ENCODE measurements at regions of chr10 and their contacts with region 1.

Region 1: GRCh38 chr10:77391605-77392235 is 245.9 kb downstream of the KCNMA1 start:
- DNase-seq: peak; percentile 78
- H3K4me3 ChIP-seq: no peak overlapping the region
- H3K27ac ChIP-seq: peak overlapping the region; percentile 64
- H3K4me1 ChIP-seq: peaks cover 66% of the 10 kb centered on the region
- H3K27me3 ChIP-seq: no peaks in the 10 kb centered on the region
- CTCF ChIP-seq: peak; percentile 59 to 75

Region 2: DNA sequence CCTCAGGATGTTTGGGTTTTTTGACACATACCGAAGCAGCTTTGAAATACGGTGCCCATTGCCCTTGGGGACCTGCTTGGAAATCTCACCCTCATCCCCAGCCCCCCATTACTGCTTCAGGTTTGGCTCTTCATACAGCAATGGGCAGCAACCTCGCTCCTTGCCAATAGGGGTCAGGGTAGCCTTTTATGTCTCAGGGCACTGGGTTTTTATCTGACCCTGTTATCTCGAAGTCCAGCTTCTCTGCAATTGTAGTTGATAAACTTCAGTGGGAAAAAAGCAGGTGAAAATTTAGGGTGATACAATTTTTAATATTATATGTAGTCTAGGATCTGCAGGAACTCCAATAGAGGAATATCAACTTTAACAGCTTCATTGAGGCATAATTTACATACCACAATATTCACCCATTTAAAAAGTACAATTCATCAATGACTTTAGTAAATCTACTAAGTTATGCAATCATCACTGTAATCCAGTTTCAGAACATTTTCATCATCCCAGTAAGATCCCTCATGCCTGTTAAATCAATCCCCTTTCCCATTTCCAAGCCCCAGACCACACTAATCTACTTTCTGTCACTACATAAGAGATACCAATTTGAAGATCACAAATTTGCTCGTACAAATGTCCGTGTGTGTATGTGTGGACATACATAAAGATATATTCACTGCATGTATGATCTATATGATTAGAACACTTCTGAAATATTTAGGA is 140.3 kb before region 1 on chr10:
- CTCF ChIA-PET with region 1: no interaction called
- dilution Hi-C with region 1: no loop called
- in situ Hi-C with region 1: no loop called
- intact Hi-C with region 1: loop called (anchors 2 kb)
- DNase-seq: peak; percentile 29
- H3K4me3 ChIP-seq: no peak overlapping the region
- H3K27ac ChIP-seq: no peak overlapping the region
- H3K4me1 ChIP-seq: peaks cover 10% of the 10 kb centered on the region
- H3K27me3 ChIP-seq: no peaks in the 10 kb centered on the region
- CTCF ChIP-seq: peak; percentile 67 to 77

Region 3: DNA sequence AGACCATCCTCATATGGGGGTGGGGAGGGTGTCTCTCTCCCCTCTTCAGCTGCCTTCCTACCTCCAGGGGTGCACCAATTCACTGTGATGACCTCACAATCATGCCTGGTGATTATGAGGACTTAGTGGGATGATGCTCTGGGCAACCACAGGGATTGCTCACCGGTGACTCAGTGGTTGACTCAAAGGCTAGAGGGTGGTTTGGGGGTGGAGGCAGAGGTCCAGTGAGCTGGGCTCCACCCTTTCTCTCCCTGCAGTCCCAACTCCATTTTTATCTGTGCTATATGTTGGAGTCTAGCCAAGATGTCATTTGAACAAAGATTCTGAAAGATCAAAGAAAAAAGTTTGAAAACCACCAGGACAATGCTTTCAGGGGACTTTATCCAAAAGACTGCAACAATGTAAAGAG is 41.0 kb before region 1 on chr10:
- CTCF ChIA-PET with region 1: no interaction called
- dilution Hi-C with region 1: no loop called
- in situ Hi-C with region 1: no loop called
- intact Hi-C with region 1: loop called (anchors 2 kb)
- DNase-seq: peak; percentile 98
- H3K4me3 ChIP-seq: no peak overlapping the region
- H3K27ac ChIP-seq: peak overlapping the region; percentile 69
- H3K4me1 ChIP-seq: peaks cover 40% of the 10 kb centered on the region
- H3K27me3 ChIP-seq: no peaks in the 10 kb centered on the region
- CTCF ChIP-seq: peak in 1 of 2 donors; percentile 27

Region 4: DNA sequence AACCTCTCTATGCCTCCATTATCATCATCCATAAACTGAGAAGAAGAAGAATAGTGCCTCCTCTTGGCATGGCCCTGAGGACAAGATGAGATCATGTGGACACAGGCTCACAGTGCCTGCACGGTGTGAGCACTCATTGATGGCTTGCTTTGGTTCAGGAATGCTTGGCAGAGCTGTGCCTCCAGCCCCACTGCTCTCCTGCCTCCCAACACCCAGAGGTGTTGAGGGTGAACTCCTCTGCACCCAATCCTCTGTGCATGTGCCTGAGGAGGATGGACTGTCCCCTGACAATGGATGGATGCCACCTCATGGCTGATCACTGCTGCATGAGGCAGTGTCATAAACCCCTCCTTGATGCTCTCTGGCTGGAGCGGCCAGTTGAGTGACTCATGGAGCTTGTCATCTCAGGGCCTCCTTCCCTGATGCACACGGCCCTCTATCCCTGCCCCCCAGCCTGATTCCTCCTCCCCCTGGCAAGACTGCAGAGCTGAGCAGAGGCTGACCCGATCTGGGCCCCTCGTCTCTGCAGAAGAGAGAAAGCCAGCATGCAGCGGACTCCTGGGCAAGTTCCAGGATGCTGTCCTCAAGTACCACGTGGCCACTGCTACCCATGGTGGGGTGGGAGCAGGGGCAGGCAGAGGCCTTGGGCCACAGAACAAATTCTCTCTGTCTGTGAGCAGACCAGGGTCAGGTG is 109.6 kb after region 1 on chr10:
- CTCF ChIA-PET with region 1: interaction called, 5 read pairs
- dilution Hi-C with region 1: no loop called
- in situ Hi-C with region 1: no loop called
- intact Hi-C with region 1: loop called (anchors 2 kb)
- DNase-seq: peak; percentile 78
- H3K4me3 ChIP-seq: no peak overlapping the region
- H3K27ac ChIP-seq: peak overlapping the region; percentile 45
- H3K4me1 ChIP-seq: peaks cover 69% of the 10 kb centered on the region
- H3K27me3 ChIP-seq: no peaks in the 10 kb centered on the region
- CTCF ChIP-seq: no peak

Region 5: GRCh38 chr10:77592946-77593636 is 201.4 kb after region 1 on chr10:
- CTCF ChIA-PET with region 1: no interaction called
- dilution Hi-C with region 1: no loop called
- in situ Hi-C with region 1: no loop called
- intact Hi-C with region 1: no loop called
- DNase-seq: peak; percentile 96
- H3K4me3 ChIP-seq: no peak overlapping the region
- H3K27ac ChIP-seq: peak overlapping the region; percentile 74
- H3K4me1 ChIP-seq: peaks cover 24% of the 10 kb centered on the region
- H3K27me3 ChIP-seq: no peaks in the 10 kb centered on the region
- CTCF ChIP-seq: no peak

Region 6: DNA sequence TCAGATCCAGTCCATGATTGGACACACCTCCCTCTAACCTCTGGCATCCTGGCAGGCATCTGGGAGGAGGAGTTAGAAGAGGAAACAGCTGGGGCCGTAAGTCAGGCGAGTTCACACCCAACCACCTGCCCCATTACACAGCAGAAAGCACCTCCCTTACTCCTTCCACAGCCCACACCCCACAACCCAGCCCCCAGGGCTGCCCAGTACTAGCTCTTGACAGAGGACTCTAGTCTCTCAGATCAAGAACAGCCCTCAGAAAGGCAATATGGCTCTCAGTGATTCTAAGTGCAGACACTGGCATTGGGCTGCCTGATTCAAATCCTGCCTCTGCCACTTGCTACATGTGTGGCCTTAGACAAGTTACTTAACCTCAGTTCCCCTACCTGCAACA is 211.8 kb after region 1 on chr10:
- CTCF ChIA-PET with region 1: interaction called, 3 read pairs
- dilution Hi-C with region 1: no loop called
- in situ Hi-C with region 1: no loop called
- intact Hi-C with region 1: loop called (anchors 1 kb)
- DNase-seq: no peak
- H3K4me3 ChIP-seq: no peak overlapping the region
- H3K27ac ChIP-seq: no peak overlapping the region
- H3K4me1 ChIP-seq: peaks cover 44% of the 10 kb centered on the region
- H3K27me3 ChIP-seq: no peaks in the 10 kb centered on the region
- CTCF ChIP-seq: no peak

Region 7: DNA sequence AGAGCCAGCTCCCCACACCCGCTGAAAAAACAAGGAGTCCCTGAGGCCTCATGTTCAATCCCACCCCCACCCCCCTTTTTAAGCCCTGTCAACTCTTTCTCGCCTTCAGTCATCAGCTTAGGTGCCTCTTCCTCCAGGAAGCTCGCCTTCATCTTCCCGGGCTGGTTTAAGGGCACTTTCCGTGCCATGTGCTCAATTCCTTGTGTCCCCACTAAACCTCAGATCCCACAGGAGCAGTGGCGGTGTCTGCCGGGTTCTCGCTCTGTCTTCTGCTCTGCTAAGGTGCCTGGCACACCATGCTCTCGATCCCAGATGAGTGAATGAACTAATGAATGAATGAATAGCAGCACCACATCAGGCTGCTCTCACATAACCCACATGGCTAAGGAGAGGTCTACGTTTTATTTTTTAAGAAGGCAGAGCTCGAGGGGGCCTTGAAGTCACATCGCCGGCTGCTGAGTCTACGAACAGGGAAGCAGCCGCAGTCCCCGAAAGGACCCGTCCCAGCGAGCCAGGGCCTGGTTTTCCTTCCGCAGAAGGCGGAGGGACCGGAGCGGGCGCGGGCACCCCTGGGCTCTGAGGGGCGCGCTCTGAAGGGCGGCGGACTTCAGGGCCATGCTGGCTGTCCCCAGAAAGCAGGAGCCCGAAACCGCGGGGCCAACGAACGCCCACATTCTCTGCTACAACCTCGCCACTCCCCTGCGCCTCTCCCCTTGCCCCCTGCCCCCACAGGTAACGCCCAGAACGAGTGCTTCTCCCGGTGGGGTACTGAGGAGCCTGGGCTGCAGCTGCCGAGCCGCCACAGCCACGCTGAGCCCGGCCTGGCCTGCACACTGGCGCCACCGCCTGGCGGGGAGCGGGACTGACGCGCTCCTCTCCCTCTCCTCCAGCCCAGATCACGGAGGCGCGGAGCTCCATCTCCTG is 319.3 kb after region 1 on chr10:
- CTCF ChIA-PET with region 1: interaction called, 7 read pairs
- dilution Hi-C with region 1: no loop called
- in situ Hi-C with region 1: no loop called
- intact Hi-C with region 1: loop called (anchors 1 kb)
- DNase-seq: peak; percentile 43
- H3K4me3 ChIP-seq: peak overlapping the region in 2 of 3 experiments; percentile 4 to 42
- H3K27ac ChIP-seq: no peak overlapping the region
- H3K4me1 ChIP-seq: peaks cover 8% of the 10 kb centered on the region
- H3K27me3 ChIP-seq: no peaks in the 10 kb centered on the region
- CTCF ChIP-seq: peak; percentile 92 to 99

Measured in mammary epithelial cell (primary cell).